ENCODE measurements at regions of chr2 and their contacts with region 1.

Region 1: GRCh38 chr2:152445791-152446201 is 110.8 kb downstream of the FMNL2 start:
- DNase-seq: peak; percentile 84
- H3K4me3 Mint-ChIP-seq: peak overlapping the region; percentile 29
- H3K27ac Mint-ChIP-seq: peak overlapping the region; percentile 12
- H3K4me1 Mint-ChIP-seq: peaks cover 47% of the 10 kb centered on the region
- H3K27me3 Mint-ChIP-seq: no peaks in the 10 kb centered on the region
- CTCF ChIP-seq: no peak

Region 2: DNA sequence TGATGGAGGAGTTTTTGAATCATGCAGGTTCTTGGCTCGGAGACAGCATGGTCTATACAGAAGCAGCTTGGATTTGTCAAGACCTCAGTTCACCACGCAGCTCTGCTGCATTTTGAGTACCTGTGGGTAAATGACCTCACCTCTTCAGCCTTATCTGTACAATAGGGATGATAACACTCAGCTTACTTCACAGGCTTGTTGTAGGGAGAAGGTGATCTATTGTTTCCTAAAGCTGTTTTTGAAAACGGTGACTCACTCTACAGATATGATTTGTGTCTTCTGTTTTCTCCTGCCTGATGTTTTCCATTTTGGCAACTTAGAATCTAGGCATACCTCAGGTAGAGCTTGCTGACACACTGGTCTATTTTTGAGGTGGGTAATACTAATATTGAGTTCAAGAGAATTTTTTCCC is 30.6 kb before region 1 on chr2:
- CTCF ChIA-PET with region 1: interaction called, 4 read pairs
- POLR2A ChIA-PET with region 1: interaction called, 10 read pairs
- intact Hi-C with region 1: no loop called
- DNase-seq: peak; percentile 56
- H3K4me3 Mint-ChIP-seq: no peak overlapping the region
- H3K27ac Mint-ChIP-seq: peak overlapping the region; percentile 79
- H3K4me1 Mint-ChIP-seq: peaks cover 65% of the 10 kb centered on the region
- H3K27me3 Mint-ChIP-seq: no peaks in the 10 kb centered on the region
- CTCF ChIP-seq: no peak

Region 3: DNA sequence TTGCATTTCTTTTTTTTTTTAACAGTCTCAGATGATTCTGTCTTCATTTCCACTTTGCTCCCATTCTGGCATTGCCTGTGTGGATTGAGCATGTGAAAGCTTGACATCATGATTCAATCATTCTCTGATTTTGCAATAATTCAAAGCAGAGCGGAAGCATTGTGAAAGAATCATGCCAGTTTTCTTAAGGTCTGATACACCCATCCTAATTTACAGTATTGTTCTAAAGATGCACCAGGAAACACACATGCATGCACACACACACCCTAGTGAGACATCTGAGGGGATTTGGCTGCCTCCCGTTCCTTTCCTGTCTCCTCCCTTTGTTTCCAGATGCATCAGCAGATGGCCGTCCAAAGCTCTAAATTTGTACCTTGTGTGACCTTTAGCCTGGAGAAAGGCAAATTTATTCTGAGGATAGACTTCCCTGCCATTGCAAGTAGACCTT is 13.6 kb before region 1 on chr2:
- CTCF ChIA-PET with region 1: interaction called, 6 read pairs
- POLR2A ChIA-PET with region 1: interaction called, 16 read pairs
- intact Hi-C with region 1: no loop called
- DNase-seq: peak; percentile 96
- H3K4me3 Mint-ChIP-seq: peak overlapping the region; percentile 8
- H3K27ac Mint-ChIP-seq: peak overlapping the region; percentile 83
- H3K4me1 Mint-ChIP-seq: peaks cover 39% of the 10 kb centered on the region
- H3K27me3 Mint-ChIP-seq: no peaks in the 10 kb centered on the region
- CTCF ChIP-seq: no peak

Region 4: DNA sequence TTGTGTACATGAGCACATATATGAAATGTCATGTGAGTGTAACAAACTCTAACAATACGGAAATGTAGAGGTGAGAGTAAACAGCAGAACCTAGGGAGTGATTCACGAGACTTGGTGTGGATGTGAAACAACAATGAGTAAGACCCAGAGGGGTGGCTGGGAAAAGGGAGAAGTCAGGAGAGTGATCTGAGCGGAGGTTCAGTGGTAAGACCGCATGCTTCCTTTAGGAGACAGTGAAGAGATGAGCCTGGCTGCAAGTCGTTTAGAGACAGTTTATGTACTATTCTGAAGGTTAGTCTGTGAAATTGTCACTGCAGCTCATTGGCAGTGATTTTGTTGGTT is 120.9 kb after region 1 on chr2:
- CTCF ChIA-PET with region 1: no interaction called
- POLR2A ChIA-PET with region 1: no interaction called
- intact Hi-C with region 1: no loop called
- DNase-seq: no peak
- H3K4me3 Mint-ChIP-seq: no peak overlapping the region
- H3K27ac Mint-ChIP-seq: no peak overlapping the region
- H3K4me1 Mint-ChIP-seq: peaks cover 11% of the 10 kb centered on the region
- H3K27me3 Mint-ChIP-seq: no peaks in the 10 kb centered on the region
- CTCF ChIP-seq: no peak